Endothelial cell of umbilical vein (primary cell): ENCODE measurements at regions of chr16 and their contacts with region 1.

Region 1: GRCh38 chr16:77599793-77600415 is 122.4 kb upstream of the NUDT7 start:
- DNase-seq: peak; percentile 77
- H3K4me3 ChIP-seq: no peak overlapping the region
- H3K27ac ChIP-seq: no peak overlapping the region
- H3K4me1 ChIP-seq: peaks cover 26% of the 10 kb centered on the region
- H3K27me3 ChIP-seq: no peaks in the 10 kb centered on the region
- CTCF ChIP-seq: peak; percentile 81 to 94
- POLR2A ChIP-seq: no peak

Region 2: DNA sequence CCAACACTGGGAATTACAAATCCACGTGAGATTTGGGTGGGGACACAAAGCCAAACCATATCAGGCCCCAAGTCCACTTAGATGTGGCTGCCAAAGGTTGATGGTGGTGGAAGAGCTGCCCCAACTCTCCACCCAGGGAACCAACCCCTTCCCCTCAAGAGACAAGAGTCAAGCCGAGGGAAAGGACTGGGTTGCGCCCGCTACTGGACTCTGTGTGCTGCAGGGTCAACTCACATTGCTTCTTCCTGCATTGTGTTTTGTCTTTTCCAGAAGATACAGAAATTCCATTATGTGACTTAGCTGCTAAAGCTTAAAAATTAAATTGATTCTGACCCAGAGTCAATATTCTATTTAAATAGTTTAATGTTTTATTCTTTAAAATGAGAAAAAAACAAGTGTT is 223.5 kb before region 1 on chr16:
- CTCF ChIA-PET with region 1: no interaction called
- POLR2A ChIA-PET with region 1: no interaction called
- dilution Hi-C with region 1: no loop called
- intact Hi-C with region 1: no loop called
- DNase-seq: no peak
- H3K4me3 ChIP-seq: no peak overlapping the region
- H3K27ac ChIP-seq: no peak overlapping the region
- H3K4me1 ChIP-seq: no peaks in the 10 kb centered on the region
- H3K27me3 ChIP-seq: no peaks in the 10 kb centered on the region
- CTCF ChIP-seq: peak in 1 of 2 donors; percentile 17
- POLR2A ChIP-seq: no peak

Region 3: DNA sequence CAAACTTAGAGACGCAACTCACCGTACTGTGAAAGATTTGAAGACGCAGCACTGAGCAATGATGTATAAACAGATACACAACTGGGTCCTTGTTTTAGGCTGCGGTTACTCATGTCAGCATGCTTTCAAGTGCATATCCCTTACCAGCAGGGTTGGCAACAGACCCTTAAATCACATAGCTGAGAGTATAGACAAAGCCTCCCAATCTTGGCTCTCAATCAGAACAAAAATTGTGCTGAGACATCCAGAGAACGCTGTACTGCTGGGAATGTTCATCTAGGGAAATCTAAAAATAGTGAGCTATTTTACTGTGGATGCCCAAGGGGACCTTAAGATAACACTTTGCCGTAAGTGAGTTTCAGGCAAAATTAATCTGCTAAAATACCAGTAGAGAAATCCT is 38.0 kb after region 1 on chr16:
- CTCF ChIA-PET with region 1: no interaction called
- POLR2A ChIA-PET with region 1: no interaction called
- dilution Hi-C with region 1: no loop called
- intact Hi-C with region 1: no loop called
- DNase-seq: no peak
- H3K4me3 ChIP-seq: no peak overlapping the region
- H3K27ac ChIP-seq: no peak overlapping the region
- H3K4me1 ChIP-seq: no peaks in the 10 kb centered on the region
- H3K27me3 ChIP-seq: peaks cover 6 to 12% of the 10 kb centered on the region in 2 experiments
- CTCF ChIP-seq: no peak
- POLR2A ChIP-seq: no peak

Region 4: GRCh38 chr16:77660311-77660710 is 60.4 kb after region 1 on chr16:
- CTCF ChIA-PET with region 1: interaction called, 26 read pairs
- POLR2A ChIA-PET with region 1: no interaction called
- dilution Hi-C with region 1: no loop called
- intact Hi-C with region 1: loop called (anchors 1 kb)
- DNase-seq: peak; percentile 81
- H3K4me3 ChIP-seq: no peak overlapping the region
- H3K27ac ChIP-seq: peak overlapping the region; percentile 40
- H3K4me1 ChIP-seq: peaks cover 10% of the 10 kb centered on the region
- H3K27me3 ChIP-seq: no peaks in the 10 kb centered on the region
- CTCF ChIP-seq: peak; percentile 65 to 68
- POLR2A ChIP-seq: no peak

Region 5: GRCh38 chr16:77833921-77834634 is 234.2 kb after region 1 on chr16:
- CTCF ChIA-PET with region 1: no interaction called
- POLR2A ChIA-PET with region 1: no interaction called
- dilution Hi-C with region 1: no loop called
- intact Hi-C with region 1: loop called (anchors 2 kb)
- DNase-seq: peak; percentile 89
- H3K4me3 ChIP-seq: no peak overlapping the region
- H3K27ac ChIP-seq: peak overlapping the region; percentile 99
- H3K4me1 ChIP-seq: peaks cover 14% of the 10 kb centered on the region
- H3K27me3 ChIP-seq: no peaks in the 10 kb centered on the region
- CTCF ChIP-seq: no peak
- POLR2A ChIP-seq: peak; percentile 53

Region 6: DNA sequence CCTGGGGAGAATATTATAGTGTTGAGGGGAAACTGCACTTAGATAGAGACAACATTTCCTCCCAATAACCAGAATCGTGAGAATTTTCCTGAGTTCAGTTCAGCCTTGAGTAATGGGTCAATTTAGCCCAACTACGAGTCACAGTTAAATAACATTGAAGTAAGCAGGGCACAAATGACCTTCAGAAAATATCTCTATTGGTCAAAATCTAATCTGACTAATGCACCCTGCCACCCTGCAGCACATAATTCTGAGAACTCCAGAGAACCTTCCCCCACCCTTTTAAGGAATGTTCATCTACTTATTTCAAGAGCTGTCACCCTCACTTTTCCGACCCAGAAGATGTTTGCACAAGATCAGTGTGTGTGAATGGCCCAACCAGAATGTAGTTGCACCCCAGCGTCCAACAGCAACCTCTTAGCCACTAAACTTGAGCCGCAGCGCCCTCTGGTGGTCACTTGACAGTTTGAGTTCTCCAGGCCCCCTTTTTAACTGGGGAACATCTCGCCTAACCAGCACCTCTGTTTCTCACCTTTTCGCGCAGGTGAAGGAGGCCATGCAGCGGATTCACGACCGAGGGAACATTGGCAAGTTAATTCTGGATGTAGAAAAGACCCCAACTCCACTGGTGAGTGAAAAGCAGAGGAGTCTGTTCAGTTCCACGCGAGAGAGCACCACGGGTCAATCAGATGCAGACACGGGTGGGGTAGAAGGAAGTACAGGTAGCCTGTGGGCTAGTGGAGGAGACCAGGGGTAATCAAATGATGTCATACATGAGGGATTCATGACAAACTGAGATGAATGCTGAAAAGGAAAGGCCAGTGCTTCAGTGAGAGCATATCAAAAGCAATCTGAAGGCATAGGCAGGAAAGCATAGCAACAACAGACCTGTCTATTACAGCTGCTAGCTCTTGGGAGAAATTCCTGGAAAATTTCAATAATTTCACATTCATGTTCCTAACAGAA is 371.7 kb after region 1 on chr16:
- CTCF ChIA-PET with region 1: interaction called, 3 read pairs
- POLR2A ChIA-PET with region 1: no interaction called
- dilution Hi-C with region 1: no loop called
- intact Hi-C with region 1: loop called (anchors 1 kb)
- DNase-seq: peak; percentile 52
- H3K4me3 ChIP-seq: no peak overlapping the region
- H3K27ac ChIP-seq: no peak overlapping the region
- H3K4me1 ChIP-seq: no peaks in the 10 kb centered on the region
- H3K27me3 ChIP-seq: no peaks in the 10 kb centered on the region
- CTCF ChIP-seq: peak; percentile 73 to 81
- POLR2A ChIP-seq: no peak